Heart left ventricle (tissue), 16 donors: ENCODE measurements at regions of chr1 and their contacts with region 1.

Region 1: GRCh38 chr1:69038379-69038778 is 529.3 kb upstream of the LRRC7 start:
- DNase-seq: no peak
- ATAC-seq: no peak
- H3K4me3 ChIP-seq: no peak overlapping the region
- H3K27ac ChIP-seq: no peak overlapping the region
- H3K4me1 ChIP-seq: no peaks in the 10 kb centered on the region
- H3K27me3 ChIP-seq: no peaks in the 10 kb centered on the region
- CTCF ChIP-seq: no peak
- POLR2A ChIP-seq: no peak

Region 2: GRCh38 chr1:68975212-68975933 is 63.0 kb before region 1 on chr1:
- intact Hi-C with region 1: loop called in 1 of 10 experiments (anchors 10 kb)
- DNase-seq: no peak
- ATAC-seq: no peak
- H3K4me3 ChIP-seq: no peak overlapping the region
- H3K27ac ChIP-seq: no peak overlapping the region
- H3K4me1 ChIP-seq: no peaks in the 10 kb centered on the region
- H3K27me3 ChIP-seq: no peaks in the 10 kb centered on the region
- CTCF ChIP-seq: no peak
- POLR2A ChIP-seq: no peak

Region 3: DNA sequence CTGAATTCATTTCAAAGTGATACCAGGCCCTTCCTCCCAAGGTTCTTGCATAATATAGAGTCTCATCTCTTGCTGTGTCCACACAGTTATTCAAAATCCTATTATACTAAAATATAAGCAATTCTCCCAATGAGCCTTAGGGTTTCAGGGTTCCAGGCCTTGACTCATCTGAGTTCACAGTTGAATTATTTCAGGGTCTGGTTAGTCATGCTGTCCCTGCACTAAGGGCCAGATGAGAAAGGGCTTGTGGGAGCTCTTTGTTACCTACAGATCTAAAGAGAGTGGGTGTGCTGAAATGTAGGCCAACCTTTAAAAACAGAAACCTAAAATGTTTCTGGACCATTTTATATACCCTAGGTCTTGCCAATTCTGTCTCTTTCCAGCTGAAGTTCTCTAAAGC is 191.8 kb after region 1 on chr1:
- intact Hi-C with region 1: no loop called
- DNase-seq: no peak
- ATAC-seq: no peak
- H3K4me3 ChIP-seq: no peak overlapping the region
- H3K27ac ChIP-seq: no peak overlapping the region
- H3K4me1 ChIP-seq: no peaks in the 10 kb centered on the region
- H3K27me3 ChIP-seq: no peaks in the 10 kb centered on the region
- CTCF ChIP-seq: no peak
- POLR2A ChIP-seq: no peak